PC-3 (cell line): ENCODE measurements at regions of chr14 and their contacts with region 1.

Region 1: DNA sequence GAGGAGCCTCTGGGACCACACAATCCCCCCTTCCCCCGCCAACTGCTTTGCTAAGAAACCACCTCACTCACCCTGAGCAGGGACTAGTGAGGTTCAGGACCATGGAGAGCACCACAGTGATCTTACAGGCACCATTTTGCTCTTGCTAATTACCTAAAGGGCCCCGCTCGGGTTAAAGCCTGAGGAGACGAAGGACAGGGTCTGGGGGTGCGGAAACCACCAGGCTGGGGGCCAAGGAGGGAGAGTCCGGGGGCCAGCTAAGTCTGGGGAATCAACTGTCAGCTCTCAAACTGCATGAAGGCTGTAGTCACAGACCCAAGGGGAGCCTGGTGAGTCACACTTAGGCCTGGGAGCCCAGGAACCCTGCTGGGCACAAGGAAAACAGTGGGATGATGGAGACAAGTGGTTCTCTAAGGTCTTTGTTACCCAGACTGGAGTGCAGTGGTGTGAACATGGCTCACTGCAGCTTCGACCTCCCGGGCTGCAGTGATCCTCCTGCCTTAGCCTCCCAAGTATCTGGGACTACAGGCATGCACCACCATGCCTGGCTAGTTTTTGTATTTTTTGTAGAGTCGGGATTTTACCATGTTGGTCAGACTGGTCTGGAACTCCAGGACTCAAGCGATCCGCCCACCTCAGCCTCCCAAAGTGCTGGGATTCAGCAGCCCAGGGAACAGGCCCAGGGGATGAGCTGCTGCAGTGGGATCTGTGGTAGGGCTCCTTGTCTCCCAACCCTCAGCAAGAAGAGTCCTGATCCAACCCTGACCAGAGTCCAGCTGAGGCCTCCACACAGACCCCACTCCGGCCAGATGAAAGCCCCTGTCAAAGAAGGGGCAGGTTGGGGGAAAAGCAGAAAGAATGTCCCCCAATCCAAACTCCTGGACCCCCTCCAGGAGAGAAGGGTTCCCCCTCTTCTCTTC is 98.8 kb downstream of the CALM1 start:
- DNase-seq: peak; percentile 69
- ATAC-seq: peak; percentile 63
- H3K4me3 ChIP-seq: no peak overlapping the region
- H3K27ac ChIP-seq: no peak overlapping the region
- H3K4me1 ChIP-seq: no peaks in the 10 kb centered on the region
- H3K27me3 ChIP-seq: peaks cover 7% of the 10 kb centered on the region; the same call in 1 of the 2 replicates
- CTCF ChIP-seq: no peak

Region 2: GRCh38 chr14:89650077-89650978 is 845.3 kb before region 1 on chr14:
- CTCF ChIA-PET with region 1: no interaction called
- POLR2A ChIA-PET with region 1: no interaction called
- intact Hi-C with region 1: no loop called
- DNase-seq: no peak
- ATAC-seq: no peak
- H3K4me3 ChIP-seq: no peak overlapping the region
- H3K27ac ChIP-seq: no peak overlapping the region
- H3K4me1 ChIP-seq: no peaks in the 10 kb centered on the region
- H3K27me3 ChIP-seq: no peaks in the 10 kb centered on the region
- CTCF ChIP-seq: no peak

Region 3: GRCh38 chr14:90355540-90356518 is 139.8 kb before region 1 on chr14:
- CTCF ChIA-PET with region 1: no interaction called
- POLR2A ChIA-PET with region 1: no interaction called
- intact Hi-C with region 1: no loop called
- DNase-seq: no peak
- ATAC-seq: peak; percentile 42; the same call in 1 of the 2 replicates
- H3K4me3 ChIP-seq: no peak overlapping the region
- H3K27ac ChIP-seq: no peak overlapping the region
- H3K4me1 ChIP-seq: no peaks in the 10 kb centered on the region
- H3K27me3 ChIP-seq: peaks cover 19% of the 10 kb centered on the region
- CTCF ChIP-seq: no peak

Region 4: GRCh38 chr14:90368946-90369721 is 126.5 kb before region 1 on chr14:
- CTCF ChIA-PET with region 1: no interaction called
- POLR2A ChIA-PET with region 1: no interaction called
- intact Hi-C with region 1: loop called (anchors 5 kb)
- DNase-seq: peak; percentile 66
- ATAC-seq: peak; percentile 95
- H3K4me3 ChIP-seq: no peak overlapping the region
- H3K27ac ChIP-seq: no peak overlapping the region
- H3K4me1 ChIP-seq: peaks cover 6% of the 10 kb centered on the region
- H3K27me3 ChIP-seq: no peaks in the 10 kb centered on the region
- CTCF ChIP-seq: peak; percentile 46

Region 5: DNA sequence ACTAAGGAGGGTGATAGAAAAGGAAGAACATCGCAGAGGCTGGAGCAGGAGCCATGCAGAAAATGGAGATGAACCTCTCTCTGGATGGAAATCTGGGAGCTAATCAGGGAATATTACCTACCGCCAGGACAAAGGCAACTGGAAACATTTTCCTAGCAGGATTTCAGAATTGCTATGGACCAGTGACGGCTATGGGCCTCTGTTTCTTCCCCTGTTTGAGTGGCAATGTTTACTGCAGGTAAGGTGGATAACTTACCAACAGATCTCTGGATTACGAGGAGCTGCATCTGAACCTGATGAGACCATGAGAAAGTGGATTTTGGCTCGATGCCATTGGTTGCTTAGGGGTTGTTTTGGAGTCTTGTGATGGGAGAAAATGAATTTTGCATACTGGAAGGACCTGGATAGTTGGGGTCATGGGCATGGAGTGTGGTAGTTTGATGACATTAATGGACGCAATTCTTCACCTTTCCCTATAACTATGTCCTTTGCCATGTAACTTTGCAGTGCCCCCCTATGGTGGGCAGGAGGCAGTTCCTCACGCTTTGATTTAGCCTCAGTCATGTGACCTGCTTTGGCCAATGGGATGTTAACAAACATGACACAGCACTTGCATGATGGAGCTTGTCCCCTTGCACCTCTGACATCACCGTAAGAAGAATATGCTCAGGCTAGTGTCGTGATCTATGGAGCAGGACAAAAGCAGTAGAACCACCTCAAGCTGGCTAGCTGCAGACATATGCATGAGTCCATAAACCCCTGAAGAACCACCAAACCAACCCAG is 47.7 kb before region 1 on chr14:
- CTCF ChIA-PET with region 1: no interaction called
- POLR2A ChIA-PET with region 1: no interaction called
- intact Hi-C with region 1: loop called (anchors 2 kb)
- DNase-seq: no peak
- ATAC-seq: no peak
- H3K4me3 ChIP-seq: no peak overlapping the region
- H3K27ac ChIP-seq: no peak overlapping the region
- H3K4me1 ChIP-seq: peaks cover 20% of the 10 kb centered on the region
- H3K27me3 ChIP-seq: no peaks in the 10 kb centered on the region
- CTCF ChIP-seq: peak; percentile 29; the same call in 1 of the 2 replicates

Region 6: GRCh38 chr14:90574188-90575131 is 78.8 kb after region 1 on chr14:
- CTCF ChIA-PET with region 1: no interaction called
- POLR2A ChIA-PET with region 1: no interaction called
- intact Hi-C with region 1: no loop called
- DNase-seq: no peak
- ATAC-seq: no peak
- H3K4me3 ChIP-seq: no peak overlapping the region
- H3K27ac ChIP-seq: no peak overlapping the region
- H3K4me1 ChIP-seq: no peaks in the 10 kb centered on the region
- H3K27me3 ChIP-seq: no peaks in the 10 kb centered on the region
- CTCF ChIP-seq: no peak